GM13976 (cell line): ENCODE measurements at regions of chr1 and their contacts with region 1.

Region 1: DNA sequence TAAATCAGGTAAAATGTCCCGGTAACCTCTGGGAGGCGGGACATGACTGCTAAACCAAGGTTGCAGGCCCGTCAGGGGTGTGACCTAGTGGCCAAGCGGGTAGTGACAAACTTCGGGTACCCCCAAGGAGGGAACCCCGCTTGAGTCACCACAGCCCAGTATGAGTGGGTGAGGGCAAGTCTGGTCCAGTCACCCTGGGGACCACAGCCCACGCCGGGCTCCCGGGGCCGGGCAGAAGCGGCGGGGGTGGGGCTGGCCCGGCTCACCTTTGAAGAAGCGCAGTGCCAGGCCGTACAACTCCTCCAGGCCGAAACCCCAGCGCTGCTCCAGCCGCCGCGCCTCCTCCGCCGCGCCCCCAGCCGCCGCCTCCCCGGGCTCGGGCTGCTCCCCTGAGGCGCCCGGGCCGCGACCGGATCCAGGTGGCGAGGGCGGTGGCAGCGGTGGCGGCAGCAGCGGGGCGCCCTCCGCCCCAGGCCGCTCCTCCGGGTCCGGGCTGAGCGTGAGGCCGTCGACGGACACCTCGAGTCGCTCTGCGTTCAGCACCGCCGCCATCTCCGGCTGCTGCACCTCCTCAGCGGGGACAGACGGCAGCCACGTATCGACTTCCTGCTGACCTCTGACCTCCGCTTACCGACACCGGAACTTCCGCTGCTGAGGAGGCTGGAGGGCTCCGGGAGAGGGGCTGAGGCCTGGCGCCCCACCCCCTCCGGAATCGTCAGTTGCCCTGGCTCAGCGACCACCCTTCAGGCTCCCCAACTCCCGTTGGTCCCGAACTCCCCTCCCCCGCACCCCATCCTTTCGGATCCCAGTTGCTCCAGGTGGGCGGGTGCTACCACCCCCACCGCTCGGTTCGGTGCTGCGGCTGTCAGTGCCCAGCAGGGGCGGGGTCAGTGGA is at the start of gene ACBD3:
- DNase-seq: peak; percentile 96
- CTCF ChIP-seq: no peak

Region 2: DNA sequence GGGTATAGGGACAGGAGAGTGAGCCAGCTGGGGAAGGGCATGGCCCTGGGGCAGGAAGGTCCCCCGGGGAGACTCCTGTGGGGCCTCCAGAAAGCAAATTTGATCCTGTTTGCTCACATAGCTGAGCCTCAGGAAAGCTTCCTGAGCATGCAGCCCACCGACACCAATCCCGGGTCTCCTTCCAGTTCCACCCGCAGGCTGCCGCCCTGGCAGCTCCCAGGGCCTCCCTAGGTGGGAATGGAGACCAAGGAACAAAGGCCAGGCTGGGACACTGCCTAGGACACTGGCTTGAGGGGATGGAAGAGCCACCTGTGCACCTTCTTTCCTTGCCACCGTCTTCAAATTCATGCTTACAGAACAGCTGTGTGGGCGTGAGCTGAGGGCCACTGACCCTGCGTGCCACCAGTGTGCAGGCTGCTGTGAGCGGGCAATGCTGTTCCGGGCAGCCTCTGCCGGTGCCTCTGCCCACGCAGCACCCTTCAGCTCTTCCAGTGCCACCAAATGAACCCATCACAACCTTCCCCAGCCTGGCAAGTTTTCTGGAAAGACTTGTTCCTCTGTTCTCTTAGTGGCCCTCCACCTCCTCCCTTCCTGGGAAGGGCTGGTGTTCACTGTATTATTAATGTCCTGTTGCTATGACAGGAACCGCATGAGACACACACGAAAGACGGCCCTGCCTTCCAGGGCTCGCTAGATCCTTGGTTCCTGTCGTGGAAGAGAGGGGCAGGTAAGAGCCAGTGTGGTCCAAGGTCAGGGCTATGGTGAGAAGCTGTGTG is 53.5 kb before region 1 on chr1:
- in situ Hi-C with region 1: loop called (anchors 5 kb)
- DNase-seq: no peak
- CTCF ChIP-seq: no peak